Natural killer cell (primary cell): ENCODE measurements at regions of chr1 and their contacts with region 1.

Region 1: GRCh38 chr1:84620720-84621313 is 46.6 kb upstream of the CTBS start:
- DNase-seq: peak; percentile 86
- ATAC-seq: peak; percentile 95
- H3K4me3 ChIP-seq: peak overlapping the region; percentile 64
- H3K4me3 Mint-ChIP-seq: peak overlapping the region; percentile 88
- H3K27ac ChIP-seq: no peak overlapping the region
- H3K27ac Mint-ChIP-seq: peak overlapping the region in 1 of 2 donors; percentile 53
- H3K4me1 ChIP-seq: peaks cover 7% of the 10 kb centered on the region
- H3K4me1 Mint-ChIP-seq: peaks cover 0 to 6% of the 10 kb centered on the region in 2 donors
- H3K27me3 ChIP-seq: no peaks in the 10 kb centered on the region
- H3K27me3 Mint-ChIP-seq: peaks cover 0 to 3% of the 10 kb centered on the region in 2 donors
- CTCF ChIP-seq: peak; percentile 100

Region 2: GRCh38 chr1:83905315-83905907 is 715.4 kb before region 1 on chr1:
- intact Hi-C with region 1: loop called (anchors 10 kb)
- DNase-seq: peak in 1 of 2 donors; percentile 61
- ATAC-seq: peak in 2 of 3 donors; percentile 44 to 57
- H3K4me3 ChIP-seq: no peak overlapping the region
- H3K4me3 Mint-ChIP-seq: no peak overlapping the region
- H3K27ac ChIP-seq: no peak overlapping the region
- H3K27ac Mint-ChIP-seq: no peak overlapping the region
- H3K4me1 ChIP-seq: no peaks in the 10 kb centered on the region
- H3K4me1 Mint-ChIP-seq: no peaks in the 10 kb centered on the region
- H3K27me3 ChIP-seq: no peaks in the 10 kb centered on the region
- H3K27me3 Mint-ChIP-seq: peaks cover 4 to 14% of the 10 kb centered on the region in 2 donors
- CTCF ChIP-seq: peak; percentile 83

Region 3: DNA sequence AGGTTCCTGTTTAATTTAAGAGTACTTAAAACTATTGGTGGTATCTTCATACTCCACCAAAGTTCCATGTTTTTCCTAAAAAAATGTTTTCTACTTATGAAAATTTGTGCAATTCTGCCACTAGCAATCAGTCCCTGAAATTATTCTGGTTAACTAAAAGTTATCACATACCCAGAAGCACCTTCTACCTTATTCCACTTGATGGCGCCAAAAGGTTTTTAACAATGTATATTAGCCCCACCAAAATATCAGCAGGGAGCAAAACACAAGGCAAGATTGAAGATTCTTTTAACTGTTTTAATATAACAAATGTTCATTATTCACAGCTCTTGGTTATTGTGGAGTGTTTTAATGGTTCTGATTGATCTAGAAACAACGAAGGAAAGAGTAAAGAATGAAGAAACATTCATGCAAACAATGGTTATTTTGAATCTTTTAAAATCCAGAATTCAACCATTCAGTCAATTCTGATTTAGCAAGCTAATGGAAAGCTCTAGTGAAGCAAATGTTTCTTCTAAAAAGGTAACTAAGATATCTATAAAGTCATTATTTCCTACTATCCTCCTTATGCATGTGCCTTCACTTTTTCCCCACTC is 689.1 kb before region 1 on chr1:
- intact Hi-C with region 1: loop called (anchors 10 kb)
- DNase-seq: peak in 1 of 2 donors; percentile 69
- ATAC-seq: peak; percentile 63 to 85 (median 83)
- H3K4me3 ChIP-seq: no peak overlapping the region
- H3K4me3 Mint-ChIP-seq: no peak overlapping the region
- H3K27ac ChIP-seq: no peak overlapping the region
- H3K27ac Mint-ChIP-seq: no peak overlapping the region
- H3K4me1 ChIP-seq: no peaks in the 10 kb centered on the region
- H3K4me1 Mint-ChIP-seq: no peaks in the 10 kb centered on the region
- H3K27me3 ChIP-seq: no peaks in the 10 kb centered on the region
- H3K27me3 Mint-ChIP-seq: peaks cover 2 to 13% of the 10 kb centered on the region in 2 donors
- CTCF ChIP-seq: peak; percentile 80

Region 4: GRCh38 chr1:84442256-84442655 is 178.6 kb before region 1 on chr1:
- intact Hi-C with region 1: loop called (anchors 1 kb)
- DNase-seq: peak in 1 of 2 donors; percentile 87
- ATAC-seq: peak; percentile 98 to 99 (median 99)
- H3K4me3 ChIP-seq: no peak overlapping the region
- H3K4me3 Mint-ChIP-seq: peak overlapping the region; percentile 66
- H3K27ac ChIP-seq: no peak overlapping the region
- H3K27ac Mint-ChIP-seq: peak overlapping the region; percentile 49 to 60
- H3K4me1 ChIP-seq: peaks cover 20% of the 10 kb centered on the region
- H3K4me1 Mint-ChIP-seq: peaks cover 7 to 10% of the 10 kb centered on the region in 2 donors
- H3K27me3 ChIP-seq: no peaks in the 10 kb centered on the region
- H3K27me3 Mint-ChIP-seq: peaks cover 11% of the 10 kb centered on the region in 2 donors
- CTCF ChIP-seq: peak; percentile 65

Region 5: GRCh38 chr1:84506002-84506728 is 114.7 kb before region 1 on chr1 and contains the starts of genes GNG5 and SPATA1:
- intact Hi-C with region 1: loop called (anchors 5 kb)
- DNase-seq: peak; percentile 95 to 99
- ATAC-seq: peak; percentile 83 to 95 (median 88)
- H3K4me3 ChIP-seq: peak within 1 kb of the TSS; percentile 92
- H3K4me3 Mint-ChIP-seq: peak within 1 kb of the TSS; percentile 97
- H3K27ac ChIP-seq: peak within 1 kb of the TSS; percentile 98
- H3K27ac Mint-ChIP-seq: peak within 1 kb of the TSS; percentile 91 to 93
- H3K4me1 ChIP-seq: peaks cover 5% of the 10 kb centered on the region
- H3K4me1 Mint-ChIP-seq: peaks cover 34 to 49% of the 10 kb centered on the region in 2 donors
- H3K27me3 ChIP-seq: no peaks in the 10 kb centered on the region
- H3K27me3 Mint-ChIP-seq: no peaks in the 10 kb centered on the region
- CTCF ChIP-seq: no peak
- total RNA-seq, gene GNG5: 49.5 to 62.3 (median 57.5) TPM
- total RNA-seq, gene SPATA1: 0.63 to 4.1 (median 2.1) TPM

Region 6: GRCh38 chr1:84668185-84668584 is 47.4 kb after region 1 on chr1:
- intact Hi-C with region 1: no loop called
- DNase-seq: peak in 1 of 2 donors; percentile 54
- ATAC-seq: peak in 2 of 3 donors; percentile 64
- H3K4me3 ChIP-seq: no peak overlapping the region
- H3K4me3 Mint-ChIP-seq: no peak overlapping the region
- H3K27ac ChIP-seq: no peak overlapping the region
- H3K27ac Mint-ChIP-seq: no peak overlapping the region
- H3K4me1 ChIP-seq: peaks cover 4% of the 10 kb centered on the region
- H3K4me1 Mint-ChIP-seq: peaks cover 14 to 26% of the 10 kb centered on the region in 2 donors
- H3K27me3 ChIP-seq: no peaks in the 10 kb centered on the region
- H3K27me3 Mint-ChIP-seq: no peaks in the 10 kb centered on the region
- CTCF ChIP-seq: no peak

Region 7: GRCh38 chr1:84753516-84754385 is 132.9 kb after region 1 on chr1:
- intact Hi-C with region 1: loop called (anchors 10 kb)
- DNase-seq: peak; percentile 69 to 87
- ATAC-seq: peak; percentile 83 to 97 (median 96)
- H3K4me3 ChIP-seq: no peak overlapping the region
- H3K4me3 Mint-ChIP-seq: no peak overlapping the region
- H3K27ac ChIP-seq: no peak overlapping the region
- H3K27ac Mint-ChIP-seq: no peak overlapping the region
- H3K4me1 ChIP-seq: no peaks in the 10 kb centered on the region
- H3K4me1 Mint-ChIP-seq: peaks cover 4 to 5% of the 10 kb centered on the region in 2 donors
- H3K27me3 ChIP-seq: peaks cover 6% of the 10 kb centered on the region
- H3K27me3 Mint-ChIP-seq: peaks cover 10 to 37% of the 10 kb centered on the region in 2 donors
- CTCF ChIP-seq: peak; percentile 92